Mammary epithelial cell (primary cell): ENCODE measurements at regions of chr6 and their contacts with region 1.

Region 1: GRCh38 chr6:4018172-4018905 is 60.6 kb downstream of the FAM217A start:
- DNase-seq: peak; percentile 96
- H3K4me3 ChIP-seq: peak overlapping the region; percentile 57 to 98 (median 73)
- H3K27ac ChIP-seq: peak overlapping the region; percentile 78
- H3K4me1 ChIP-seq: peaks cover 15% of the 10 kb centered on the region
- H3K27me3 ChIP-seq: no peaks in the 10 kb centered on the region
- CTCF ChIP-seq: peak; percentile 22 to 59

Region 2: DNA sequence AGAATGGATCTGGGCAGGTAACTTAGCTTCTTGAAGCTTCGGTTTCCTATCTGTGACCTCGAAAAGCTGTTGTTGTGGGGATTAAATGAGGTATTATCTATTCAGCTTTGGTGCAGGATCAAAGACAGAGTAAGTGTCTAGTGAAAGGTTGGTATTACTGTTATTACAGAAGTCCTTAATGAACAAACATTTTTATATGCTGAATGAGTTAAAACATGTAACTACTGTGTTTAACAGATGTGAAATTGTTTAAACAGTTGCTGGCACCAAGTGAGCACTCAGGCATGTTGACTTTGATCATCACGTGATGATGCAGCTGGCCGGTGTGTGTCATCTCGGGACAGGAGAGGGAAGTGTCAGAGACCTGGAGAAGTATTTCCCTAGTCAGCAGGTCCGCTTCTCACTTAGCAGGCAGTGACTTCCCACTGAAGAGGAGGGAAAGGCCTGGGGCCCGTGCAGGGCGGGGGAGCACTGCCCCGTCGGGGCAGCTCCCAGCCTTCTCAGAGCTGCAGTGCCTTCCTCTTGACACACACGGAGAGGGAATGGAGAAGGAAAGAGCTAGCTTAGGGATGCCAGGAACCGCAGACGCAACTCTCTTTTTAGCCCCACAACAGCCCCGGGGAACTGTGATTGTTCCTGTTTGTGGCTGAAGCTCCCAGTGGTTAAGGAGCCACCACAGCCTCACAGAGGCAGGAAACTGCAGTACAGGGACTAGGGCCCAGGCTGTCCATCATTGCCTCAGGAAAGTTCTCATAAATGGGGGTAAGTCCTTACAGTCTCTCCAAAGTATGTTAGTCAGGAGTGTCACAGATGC is 879.0 kb before region 1 on chr6:
- CTCF ChIA-PET with region 1: no interaction called
- dilution Hi-C with region 1: no loop called
- in situ Hi-C with region 1: no loop called
- intact Hi-C with region 1: loop called (anchors 5 kb)
- DNase-seq: no peak
- H3K4me3 ChIP-seq: no peak overlapping the region
- H3K27ac ChIP-seq: no peak overlapping the region
- H3K4me1 ChIP-seq: peaks cover 15% of the 10 kb centered on the region
- H3K27me3 ChIP-seq: no peaks in the 10 kb centered on the region
- CTCF ChIP-seq: no peak

Region 3: DNA sequence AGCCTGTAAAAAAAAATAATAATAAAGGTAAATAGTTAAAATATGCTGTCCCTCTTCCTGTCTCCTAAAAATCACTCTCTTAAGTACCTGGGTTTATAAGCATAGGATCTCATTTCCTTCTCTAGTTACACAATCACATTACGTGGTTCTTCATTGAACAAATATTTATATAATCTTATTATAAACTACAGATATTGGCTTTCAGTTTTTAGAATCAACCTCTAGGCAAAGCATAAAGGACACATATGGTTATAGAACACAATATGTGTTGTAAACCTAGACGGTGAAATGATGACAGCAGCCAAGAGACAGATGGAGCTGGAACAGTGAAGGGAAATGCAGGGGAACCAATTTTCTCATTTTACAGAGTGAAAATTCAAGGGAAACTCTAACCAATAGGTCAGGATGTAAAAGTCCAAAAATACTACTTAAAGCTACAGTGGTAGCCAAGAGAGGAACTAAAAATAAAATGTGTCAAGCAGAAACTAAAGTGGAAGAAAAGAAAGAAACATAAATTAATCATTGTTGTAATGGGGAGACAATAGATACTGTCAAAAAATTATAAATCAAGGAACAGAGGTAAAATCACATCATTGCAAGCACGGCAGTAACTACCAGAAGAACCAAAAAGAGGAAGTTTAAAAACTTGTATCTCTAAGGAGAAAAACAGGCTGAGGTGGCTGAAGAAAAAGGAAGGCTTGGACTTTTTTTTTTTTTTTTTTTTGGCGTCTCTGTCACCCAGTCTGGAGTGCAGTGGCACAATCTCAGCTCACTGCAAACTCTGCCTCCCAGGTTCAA is 675.0 kb after region 1 on chr6:
- CTCF ChIA-PET with region 1: no interaction called
- dilution Hi-C with region 1: no loop called
- in situ Hi-C with region 1: no loop called
- intact Hi-C with region 1: no loop called
- DNase-seq: no peak
- H3K4me3 ChIP-seq: no peak overlapping the region
- H3K27ac ChIP-seq: no peak overlapping the region
- H3K4me1 ChIP-seq: peaks cover 4% of the 10 kb centered on the region
- H3K27me3 ChIP-seq: no peaks in the 10 kb centered on the region
- CTCF ChIP-seq: no peak